ENCODE measurements at regions of chr10 and their contacts with region 1.

Region 1: GRCh38 chr10:119725828-119726675 is at the start of gene INPP5F:
- DNase-seq: peak; percentile 100
- ATAC-seq: peak; percentile 89
- H3K4me3 Mint-ChIP-seq: peak within 1 kb of the TSS; percentile 94
- H3K27ac Mint-ChIP-seq: peak within 1 kb of the TSS; percentile 86
- H3K4me1 Mint-ChIP-seq: peaks cover 33% of the 10 kb centered on the region
- H3K27me3 Mint-ChIP-seq: no peaks in the 10 kb centered on the region
- total RNA-seq, gene INPP5F: 12.2 to 13.5 TPM

Region 2: DNA sequence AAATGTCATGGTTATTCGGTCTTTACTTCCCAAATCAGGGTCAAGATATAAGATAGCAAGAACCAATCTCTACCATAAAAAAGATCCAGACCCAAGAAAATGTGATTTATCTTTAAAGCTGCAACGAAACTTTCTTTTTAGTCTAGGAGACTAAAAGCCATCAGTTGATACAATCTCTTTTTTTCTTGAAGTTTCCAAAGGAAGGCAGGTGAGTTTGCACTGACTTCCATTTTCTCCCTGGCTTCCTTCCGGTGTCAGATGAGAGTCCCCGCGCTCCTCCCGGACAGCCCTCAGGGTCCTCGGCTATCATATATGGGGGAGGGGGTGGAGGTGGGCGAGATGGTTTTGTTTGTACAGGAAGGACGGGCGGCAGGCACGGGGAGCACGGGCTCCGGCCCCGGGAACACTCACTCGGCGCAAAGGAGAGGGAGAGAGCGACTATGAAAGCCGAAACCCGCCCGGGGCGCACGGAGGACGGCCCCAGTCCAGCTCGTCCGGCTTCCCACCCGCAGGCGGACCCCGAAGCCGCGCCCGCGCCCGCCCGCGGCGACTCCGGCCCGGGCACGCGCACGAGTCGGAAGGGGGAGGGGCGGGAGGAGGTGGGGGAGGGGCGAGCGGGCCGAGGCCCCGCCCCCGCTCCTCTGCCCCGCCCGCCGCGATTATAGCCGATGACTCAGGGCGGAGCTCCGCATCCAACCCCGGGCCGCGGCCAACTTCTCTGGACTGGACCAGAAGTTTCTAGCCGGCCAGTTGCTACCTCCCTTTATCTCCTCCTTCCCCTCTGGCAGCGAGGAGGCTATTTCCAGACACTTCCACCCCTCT is 75.1 kb before region 1 on chr10 and contains the start of gene BAG3:
- POLR2A ChIA-PET with region 1: interaction called, 13 read pairs
- DNase-seq: peak; percentile 85
- ATAC-seq: peak; percentile 69
- H3K4me3 Mint-ChIP-seq: peak within 1 kb of the TSS; percentile 98
- H3K27ac Mint-ChIP-seq: peak within 1 kb of the TSS; percentile 99
- H3K4me1 Mint-ChIP-seq: peaks cover 41% of the 10 kb centered on the region
- H3K27me3 Mint-ChIP-seq: peaks cover 2% of the 10 kb centered on the region
- total RNA-seq, gene BAG3: 14.5 to 15.0 TPM

Region 3: GRCh38 chr10:119737827-119738226 is 11.8 kb after region 1 on chr10:
- POLR2A ChIA-PET with region 1: interaction called, 20 read pairs
- DNase-seq: no peak
- ATAC-seq: peak; percentile 60
- H3K4me3 Mint-ChIP-seq: no peak overlapping the region
- H3K27ac Mint-ChIP-seq: peak overlapping the region; percentile 26
- H3K4me1 Mint-ChIP-seq: peaks cover 22% of the 10 kb centered on the region
- H3K27me3 Mint-ChIP-seq: no peaks in the 10 kb centered on the region